ENCODE measurements at regions of chr1 and their contacts with region 1.

Region 1: GRCh38 chr1:206912445-206913095 is 9.2 kb downstream of the FCMR start:
- DNase-seq: peak; percentile 53
- ATAC-seq: peak; percentile 51 to 70

Region 2: GRCh38 chr1:206489980-206490770 is 422.4 kb before region 1 on chr1:
- intact Hi-C with region 1: loop called in 1 of 2 experiments (anchors 10 kb)
- DNase-seq: peak; percentile 82
- ATAC-seq: peak; percentile 81 to 85

Region 3: GRCh38 chr1:206628916-206629315 is 283.7 kb before region 1 on chr1:
- intact Hi-C with region 1: loop called (anchors 5 to 10 kb)
- DNase-seq: no peak
- ATAC-seq: no peak

Region 4: GRCh38 chr1:206725109-206725963 is 187.2 kb before region 1 on chr1:
- intact Hi-C with region 1: loop called in 1 of 2 experiments (anchors 2 kb)
- DNase-seq: no peak
- ATAC-seq: no peak

Region 5: DNA sequence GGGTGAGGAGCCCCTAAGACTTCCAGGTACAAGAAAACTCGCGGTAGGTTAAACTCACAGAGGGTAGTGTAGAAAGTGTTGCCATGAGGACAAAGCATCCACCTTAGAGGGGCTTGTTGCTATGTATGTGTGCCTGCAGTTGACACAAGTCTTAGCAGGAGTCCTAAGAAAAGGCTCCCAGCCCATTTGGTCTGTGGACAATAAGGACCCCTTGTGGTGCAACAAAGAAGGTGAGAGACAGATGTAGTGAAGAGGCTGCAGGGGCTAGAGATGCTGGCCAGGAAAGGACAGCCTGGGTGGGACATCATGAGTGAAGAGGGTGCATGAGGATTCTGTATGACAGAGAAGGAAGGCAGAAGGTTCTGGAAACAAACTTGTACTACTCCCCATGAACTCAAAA is 104.0 kb before region 1 on chr1:
- intact Hi-C with region 1: loop called in 1 of 2 experiments (anchors 5 kb)
- DNase-seq: no peak
- ATAC-seq: peak; percentile 44 to 70

Region 6: DNA sequence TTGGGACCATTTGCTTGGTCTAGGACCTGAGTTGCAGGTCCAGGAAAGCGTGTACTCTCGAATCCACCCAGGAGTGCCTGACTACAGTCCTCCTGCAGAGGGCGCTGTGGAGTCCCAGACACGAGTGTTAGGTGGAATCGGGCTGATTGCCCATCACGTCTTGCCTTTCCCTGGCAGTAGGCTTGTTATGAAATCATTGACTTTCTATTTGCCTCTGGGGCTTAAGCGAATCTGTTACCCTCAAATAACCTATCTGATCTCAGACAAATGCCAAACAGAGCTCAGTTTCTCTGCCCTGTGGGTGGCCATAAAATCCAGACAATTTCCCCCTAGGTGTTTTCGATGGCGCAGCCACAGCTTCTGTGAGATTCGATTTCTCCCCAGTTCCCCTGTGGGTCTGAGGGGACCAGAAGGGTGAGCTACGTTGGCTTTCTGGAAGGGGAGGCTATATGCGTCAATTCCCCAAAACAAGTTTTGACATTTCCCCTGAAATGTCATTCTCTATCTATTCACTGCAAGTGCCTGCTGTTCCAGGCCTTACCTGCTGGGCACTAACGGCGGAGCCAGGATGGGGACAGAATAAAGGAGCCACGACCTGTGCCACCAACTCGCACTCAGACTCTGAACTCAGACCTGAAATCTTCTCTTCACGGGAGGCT is 47.4 kb before region 1 on chr1 and contains the start of gene IL20:
- intact Hi-C with region 1: loop called in 1 of 2 experiments (anchors 5 kb)
- DNase-seq: peak; percentile 82
- ATAC-seq: peak; percentile 76 to 77
- total RNA-seq, gene IL20: not detected

Region 7: DNA sequence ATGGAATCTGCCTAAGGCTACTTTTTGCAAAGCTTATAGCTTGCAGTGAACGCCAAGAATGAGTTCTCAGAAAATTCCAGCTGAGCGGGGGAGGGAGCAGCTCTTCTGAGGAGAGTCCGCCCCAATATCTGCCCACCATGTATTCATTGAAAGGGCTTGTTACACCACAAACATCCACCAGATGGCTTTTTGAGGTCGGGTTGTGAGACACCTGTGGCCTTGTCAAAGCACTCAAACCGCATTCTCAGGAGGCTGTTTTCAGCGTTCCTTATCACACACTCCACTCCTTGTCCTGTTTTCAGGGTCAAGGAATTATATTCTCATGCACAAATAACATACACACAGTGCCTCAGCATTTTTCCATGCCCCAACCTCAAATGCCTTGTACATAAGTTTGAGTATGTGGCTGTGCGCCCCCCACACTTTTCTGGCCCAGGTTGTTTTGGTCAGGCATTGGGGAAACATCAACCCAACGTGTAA is 172.2 kb after region 1 on chr1:
- intact Hi-C with region 1: no loop called
- DNase-seq: no peak
- ATAC-seq: peak; percentile 71 to 83